Activated CD4-positive, alpha-beta memory T cell treated with anti-CD3 and anti-CD28 coated beads, Interleukin-2, amount 10 ng/mL, durations not matched to agents 7 days and 5 days (primary cell): ENCODE measurements at regions of chr10 and their contacts with region 1.

Region 1: GRCh38 chr10:79374312-79375191 is 27.3 kb downstream of the PPIF start:
- DNase-seq: peak; percentile 78
- H3K4me3 Mint-ChIP-seq: no peak overlapping the region
- H3K27ac Mint-ChIP-seq: no peak overlapping the region
- H3K4me1 Mint-ChIP-seq: peaks cover 2% of the 10 kb centered on the region
- H3K27me3 Mint-ChIP-seq: peaks cover 14% of the 10 kb centered on the region

Region 2: GRCh38 chr10:79101560-79102497 is 272.7 kb before region 1 on chr10:
- CTCF ChIA-PET with region 1: no interaction called
- POLR2A ChIA-PET with region 1: no interaction called
- DNase-seq: no peak
- H3K4me3 Mint-ChIP-seq: no peak overlapping the region
- H3K27ac Mint-ChIP-seq: no peak overlapping the region
- H3K4me1 Mint-ChIP-seq: peaks cover 9% of the 10 kb centered on the region
- H3K27me3 Mint-ChIP-seq: no peaks in the 10 kb centered on the region

Region 3: GRCh38 chr10:79223091-79224048 is 151.2 kb before region 1 on chr10:
- CTCF ChIA-PET with region 1: no interaction called
- POLR2A ChIA-PET with region 1: no interaction called
- DNase-seq: no peak
- H3K4me3 Mint-ChIP-seq: no peak overlapping the region
- H3K27ac Mint-ChIP-seq: no peak overlapping the region
- H3K4me1 Mint-ChIP-seq: no peaks in the 10 kb centered on the region
- H3K27me3 Mint-ChIP-seq: no peaks in the 10 kb centered on the region

Region 4: DNA sequence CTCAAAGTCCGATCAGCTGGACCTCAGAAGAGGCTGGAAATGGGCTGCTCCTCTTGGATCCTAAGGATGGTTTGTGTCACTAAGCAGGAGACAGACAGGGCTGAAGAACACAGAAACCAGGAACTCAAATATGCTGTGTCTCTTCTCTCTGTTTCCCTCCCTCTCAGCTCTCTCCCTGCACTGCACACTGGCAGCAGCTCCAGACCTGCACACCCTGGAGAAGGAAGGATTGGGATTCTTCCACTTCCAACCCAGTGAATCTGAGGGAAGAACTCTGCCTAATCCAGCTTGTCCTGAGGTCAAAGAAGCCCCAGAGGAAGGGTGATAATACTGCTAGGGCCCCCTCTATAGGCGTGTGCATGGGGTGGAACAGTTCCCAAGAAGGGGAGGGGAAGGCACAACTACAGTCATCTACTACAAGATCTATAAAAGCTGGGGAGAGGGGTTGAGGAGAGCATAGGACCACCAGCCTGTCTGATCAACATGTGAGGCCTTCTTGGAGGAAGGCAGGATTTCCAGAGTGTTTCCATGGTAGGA is 93.5 kb after region 1 on chr10:
- CTCF ChIA-PET with region 1: interaction called, 26 read pairs
- POLR2A ChIA-PET with region 1: no interaction called
- DNase-seq: no peak
- H3K4me3 Mint-ChIP-seq: no peak overlapping the region
- H3K27ac Mint-ChIP-seq: no peak overlapping the region
- H3K4me1 Mint-ChIP-seq: no peaks in the 10 kb centered on the region
- H3K27me3 Mint-ChIP-seq: peaks cover 7% of the 10 kb centered on the region

Region 5: DNA sequence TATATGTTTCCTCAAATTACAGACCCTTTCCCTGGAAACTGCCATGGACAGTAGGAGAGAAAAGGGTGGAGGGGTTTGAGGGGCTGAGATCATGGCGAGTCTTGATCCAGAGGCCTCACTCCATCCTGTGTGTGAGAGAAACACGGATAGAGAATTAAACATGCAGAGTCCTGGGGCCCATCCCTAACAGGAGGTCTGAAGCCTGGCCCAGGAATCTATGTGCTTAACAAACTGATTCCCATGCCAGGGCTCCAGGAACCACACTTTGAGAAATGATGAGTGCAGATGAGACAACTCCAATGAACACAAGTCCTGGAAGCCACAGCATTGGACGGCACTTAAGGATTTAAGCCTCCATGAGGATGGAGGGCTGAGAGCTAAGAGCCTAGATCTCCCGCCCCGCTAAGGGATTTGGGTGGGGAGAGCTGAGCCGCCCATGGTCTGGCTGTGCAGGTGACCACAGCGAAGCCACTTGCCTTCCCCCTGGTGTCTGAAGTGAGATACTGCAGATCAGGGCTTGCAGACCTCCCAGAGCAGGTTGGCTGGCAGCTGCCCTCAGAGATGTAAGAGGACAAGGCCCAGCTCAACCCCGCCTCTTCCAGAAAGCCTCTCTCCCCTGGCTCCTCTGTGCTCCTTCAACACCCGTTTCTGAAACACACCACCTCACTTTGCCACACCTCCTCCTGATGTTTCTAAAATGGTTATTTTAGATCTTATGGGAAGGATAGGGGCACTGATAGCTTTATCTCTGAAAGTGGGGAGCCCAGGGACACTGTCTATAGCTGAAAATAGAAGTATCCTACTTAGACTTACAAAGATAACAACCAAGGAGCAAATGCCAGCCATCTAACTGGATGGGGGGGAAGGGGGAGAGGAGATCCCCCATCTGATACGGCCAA is 113.0 kb after region 1 on chr10:
- CTCF ChIA-PET with region 1: interaction called, 35 read pairs
- POLR2A ChIA-PET with region 1: no interaction called
- DNase-seq: peak; percentile 37
- H3K4me3 Mint-ChIP-seq: no peak overlapping the region
- H3K27ac Mint-ChIP-seq: no peak overlapping the region
- H3K4me1 Mint-ChIP-seq: no peaks in the 10 kb centered on the region
- H3K27me3 Mint-ChIP-seq: peaks cover 8% of the 10 kb centered on the region